ENCODE measurements at regions of chr20 and their contacts with region 1.

Region 1: DNA sequence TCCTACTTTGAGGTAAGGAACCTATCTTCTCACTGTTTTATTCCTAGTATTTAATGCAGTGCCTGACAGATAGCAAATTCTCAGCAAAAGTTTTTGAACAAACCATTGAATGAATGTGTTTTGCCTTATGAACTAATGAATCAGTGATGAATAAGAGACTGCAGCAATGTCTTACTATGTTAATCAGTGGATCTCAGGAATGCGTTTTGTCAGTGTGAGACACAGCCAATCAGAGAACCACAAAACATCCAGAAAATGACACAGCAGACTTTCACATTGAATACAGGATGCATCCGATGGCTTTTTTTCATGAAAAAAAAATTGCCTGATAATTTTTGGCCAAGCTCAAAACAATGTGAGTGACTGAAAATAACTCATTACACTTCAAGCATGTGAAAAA is 270.5 kb downstream of the BMP2 start:
- DNase-seq: no peak
- ATAC-seq: peak; percentile 61
- H3K4me3 ChIP-seq: no peak overlapping the region
- H3K27ac ChIP-seq: no peak overlapping the region
- H3K4me1 ChIP-seq: no peaks in the 10 kb centered on the region
- H3K27me3 ChIP-seq: no peaks in the 10 kb centered on the region
- CTCF ChIP-seq: no peak
- EP300 ChIP-seq: no peak
- POLR2A ChIP-seq: no peak
- RAD21 ChIP-seq: no peak

Region 2: DNA sequence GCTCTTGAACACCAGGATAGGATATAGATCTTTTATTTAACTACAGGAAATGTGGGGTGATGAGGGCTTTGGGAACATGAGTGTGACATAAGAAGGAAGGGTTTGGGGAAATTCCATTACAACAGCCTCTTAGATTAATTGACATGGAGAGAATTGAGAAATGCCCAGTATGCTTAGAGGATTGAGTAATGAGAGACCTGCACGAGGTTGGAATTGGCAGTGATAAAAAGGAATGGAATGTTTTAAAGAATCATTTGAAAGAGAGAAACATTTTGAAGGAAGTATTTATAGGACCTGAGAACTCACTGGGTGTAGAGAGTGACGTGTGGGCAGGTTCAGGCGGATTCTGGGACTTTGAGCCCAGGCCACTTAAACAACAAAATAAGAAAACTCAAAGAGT is 43.6 kb before region 1 on chr20:
- CTCF ChIA-PET with region 1: interaction called, 4 read pairs
- POLR2A ChIA-PET with region 1: no interaction called
- RAD21 ChIA-PET with region 1: no interaction called
- SMC1A ChIA-PET with region 1: interaction called, 11 read pairs
- in situ Hi-C with region 1: no loop called
- intact Hi-C with region 1: no loop called
- DNase-seq: no peak
- ATAC-seq: no peak; the same call in 2 of the 3 replicates
- H3K4me3 ChIP-seq: no peak overlapping the region
- H3K27ac ChIP-seq: no peak overlapping the region
- H3K4me1 ChIP-seq: no peaks in the 10 kb centered on the region
- H3K27me3 ChIP-seq: no peaks in the 10 kb centered on the region
- CTCF ChIP-seq: no peak
- EP300 ChIP-seq: no peak
- POLR2A ChIP-seq: no peak
- RAD21 ChIP-seq: no peak

Region 3: DNA sequence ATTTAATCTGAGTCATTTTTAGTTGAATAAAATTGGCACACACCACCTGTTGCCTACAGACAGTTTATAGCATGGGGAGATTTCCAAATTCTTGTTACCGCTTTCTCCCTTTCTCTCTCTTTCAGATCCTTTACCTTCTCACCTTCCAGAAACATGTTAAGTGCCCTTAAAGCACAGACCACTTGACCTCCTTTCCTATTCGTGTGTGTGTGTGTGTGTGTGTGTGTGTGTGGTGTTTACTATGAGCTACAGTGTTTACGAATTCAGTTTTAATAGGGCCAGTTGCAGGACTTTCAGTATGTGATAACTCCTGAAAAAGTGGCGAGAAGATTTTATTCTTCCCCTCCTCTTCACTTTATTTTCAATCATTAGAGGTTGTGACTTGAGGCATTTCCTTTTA is 12.4 kb before region 1 on chr20:
- CTCF ChIA-PET with region 1: interaction called, 11 read pairs
- POLR2A ChIA-PET with region 1: no interaction called
- RAD21 ChIA-PET with region 1: interaction called, 5 read pairs
- SMC1A ChIA-PET with region 1: interaction called, 11 read pairs
- in situ Hi-C with region 1: no loop called
- intact Hi-C with region 1: no loop called
- DNase-seq: no peak
- ATAC-seq: no peak
- H3K4me3 ChIP-seq: no peak overlapping the region
- H3K27ac ChIP-seq: no peak overlapping the region
- H3K4me1 ChIP-seq: no peaks in the 10 kb centered on the region
- H3K27me3 ChIP-seq: no peaks in the 10 kb centered on the region
- CTCF ChIP-seq: no peak
- EP300 ChIP-seq: no peak
- POLR2A ChIP-seq: no peak
- RAD21 ChIP-seq: no peak

Region 4: GRCh38 chr20:7108929-7109328 is 70.9 kb after region 1 on chr20:
- CTCF ChIA-PET with region 1: no interaction called
- POLR2A ChIA-PET with region 1: no interaction called
- RAD21 ChIA-PET with region 1: no interaction called
- SMC1A ChIA-PET with region 1: no interaction called
- in situ Hi-C with region 1: no loop called
- intact Hi-C with region 1: no loop called
- DNase-seq: no peak
- ATAC-seq: no peak
- H3K4me3 ChIP-seq: no peak overlapping the region
- H3K27ac ChIP-seq: no peak overlapping the region
- H3K4me1 ChIP-seq: no peaks in the 10 kb centered on the region
- H3K27me3 ChIP-seq: no peaks in the 10 kb centered on the region
- CTCF ChIP-seq: no peak
- EP300 ChIP-seq: no peak
- POLR2A ChIP-seq: no peak
- RAD21 ChIP-seq: no peak

Region 5: DNA sequence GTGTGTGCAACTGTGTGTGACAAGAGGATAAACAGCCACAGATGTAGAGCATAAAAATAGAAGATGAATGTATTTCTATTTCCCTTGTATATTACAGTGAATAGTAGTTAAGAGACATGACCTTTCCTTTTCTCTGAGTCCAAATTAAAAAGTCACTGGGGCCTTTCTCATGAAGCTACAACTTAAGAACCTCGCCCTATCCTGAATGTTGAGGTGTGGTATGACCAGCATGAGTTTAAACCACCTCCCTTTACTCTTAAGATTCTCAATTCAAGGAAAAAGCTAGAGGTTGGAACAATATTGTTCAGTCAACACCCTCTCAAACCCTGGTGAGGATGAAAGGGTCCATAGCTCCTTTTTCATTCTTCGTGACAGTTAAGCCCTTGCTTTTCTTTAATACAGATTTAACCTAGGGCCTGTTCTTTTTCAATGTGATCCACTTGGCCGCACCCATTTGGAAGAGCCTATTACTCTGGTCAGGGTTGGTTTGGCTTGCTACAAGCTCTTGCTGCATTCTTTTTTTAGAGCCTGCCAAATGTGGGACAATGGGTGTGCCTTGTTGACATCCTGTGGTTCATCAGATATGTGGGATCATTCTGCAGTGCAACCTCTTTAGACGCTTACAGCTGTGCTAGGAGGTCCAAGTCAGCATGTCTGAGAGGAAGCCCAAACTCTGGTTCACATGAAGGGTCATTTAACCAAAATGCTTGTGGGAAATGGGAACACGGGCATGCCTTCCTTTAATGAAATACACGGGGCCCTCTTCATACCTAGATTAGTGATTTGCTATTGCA is 612.3 kb after region 1 on chr20:
- CTCF ChIA-PET with region 1: no interaction called
- POLR2A ChIA-PET with region 1: no interaction called
- RAD21 ChIA-PET with region 1: no interaction called
- SMC1A ChIA-PET with region 1: no interaction called
- in situ Hi-C with region 1: no loop called
- intact Hi-C with region 1: no loop called
- DNase-seq: no peak
- ATAC-seq: no peak
- H3K4me3 ChIP-seq: no peak overlapping the region
- H3K27ac ChIP-seq: no peak overlapping the region
- H3K4me1 ChIP-seq: no peaks in the 10 kb centered on the region
- H3K27me3 ChIP-seq: no peaks in the 10 kb centered on the region
- CTCF ChIP-seq: no peak
- EP300 ChIP-seq: no peak
- POLR2A ChIP-seq: no peak
- RAD21 ChIP-seq: no peak